Mammary epithelial cell (primary cell): ENCODE measurements at regions of chr18 and their contacts with region 1.

Region 1: GRCh38 chr18:50194631-50195532 is at the start of gene MYO5B:
- DNase-seq: peak; percentile 89
- H3K4me3 ChIP-seq: peak within 1 kb of the TSS; percentile 57 to 72 (median 69)
- H3K27ac ChIP-seq: peak within 1 kb of the TSS; percentile 69
- H3K4me1 ChIP-seq: peaks cover 32% of the 10 kb centered on the region
- H3K27me3 ChIP-seq: peaks cover 2% of the 10 kb centered on the region
- CTCF ChIP-seq: peak; percentile 30 to 41
- total RNA-seq, gene MYO5B: 29.8 to 31.7 TPM

Region 2: GRCh38 chr18:49510393-49511115 is 684.3 kb before region 1 on chr18:
- CTCF ChIA-PET with region 1: no interaction called
- dilution Hi-C with region 1: loop called (anchors 25 kb)
- in situ Hi-C with region 1: loop called in 1 of 2 experiments (anchors 25 kb)
- intact Hi-C with region 1: loop called (anchors 5 kb)
- DNase-seq: peak; percentile 46
- H3K4me3 ChIP-seq: no peak overlapping the region
- H3K27ac ChIP-seq: no peak overlapping the region
- H3K4me1 ChIP-seq: no peaks in the 10 kb centered on the region
- H3K27me3 ChIP-seq: no peaks in the 10 kb centered on the region
- CTCF ChIP-seq: peak; percentile 92 to 93

Region 3: GRCh38 chr18:49898421-49898820 is 296.5 kb before region 1 on chr18:
- CTCF ChIA-PET with region 1: no interaction called
- dilution Hi-C with region 1: no loop called
- in situ Hi-C with region 1: loop called in 1 of 2 experiments (anchors 25 kb)
- intact Hi-C with region 1: loop called (anchors 10 kb)
- DNase-seq: peak; percentile 52
- H3K4me3 ChIP-seq: no peak overlapping the region
- H3K27ac ChIP-seq: no peak overlapping the region
- H3K4me1 ChIP-seq: no peaks in the 10 kb centered on the region
- H3K27me3 ChIP-seq: no peaks in the 10 kb centered on the region
- CTCF ChIP-seq: no peak

Region 4: DNA sequence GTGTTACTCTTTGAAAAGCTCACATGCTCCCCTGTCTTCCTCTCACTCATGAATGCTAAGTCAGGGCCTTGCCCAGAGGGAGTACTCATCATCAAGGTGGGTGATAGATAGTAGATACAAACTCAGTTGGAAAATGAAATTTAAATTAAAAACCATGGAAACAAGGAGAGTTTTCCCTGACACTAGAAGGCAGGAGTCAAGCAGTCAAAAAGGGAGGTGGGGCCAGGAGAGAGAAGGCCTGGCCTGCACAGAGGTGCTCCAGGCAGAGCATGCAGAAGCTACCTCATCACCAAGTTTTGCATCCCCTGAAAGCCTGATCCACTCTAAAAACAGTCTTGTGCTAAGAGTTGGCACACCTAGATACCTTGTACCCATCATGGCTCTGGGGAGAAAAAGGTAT is 143.6 kb before region 1 on chr18:
- CTCF ChIA-PET with region 1: interaction called, 3 read pairs
- dilution Hi-C with region 1: loop called (anchors 10 kb)
- in situ Hi-C with region 1: no loop called
- intact Hi-C with region 1: loop called (anchors 1 kb)
- DNase-seq: peak; percentile 32
- H3K4me3 ChIP-seq: no peak overlapping the region
- H3K27ac ChIP-seq: no peak overlapping the region
- H3K4me1 ChIP-seq: no peaks in the 10 kb centered on the region
- H3K27me3 ChIP-seq: no peaks in the 10 kb centered on the region
- CTCF ChIP-seq: peak; percentile 32 to 60

Region 5: GRCh38 chr18:50099725-50100407 is 95.0 kb before region 1 on chr18:
- CTCF ChIA-PET with region 1: no interaction called
- dilution Hi-C with region 1: no loop called
- in situ Hi-C with region 1: loop called (anchors 10 kb)
- intact Hi-C with region 1: loop called (anchors 1 kb)
- DNase-seq: peak; percentile 98
- H3K4me3 ChIP-seq: no peak overlapping the region
- H3K27ac ChIP-seq: peak overlapping the region; percentile 75
- H3K4me1 ChIP-seq: peaks cover 45% of the 10 kb centered on the region
- H3K27me3 ChIP-seq: no peaks in the 10 kb centered on the region
- CTCF ChIP-seq: no peak

Region 6: DNA sequence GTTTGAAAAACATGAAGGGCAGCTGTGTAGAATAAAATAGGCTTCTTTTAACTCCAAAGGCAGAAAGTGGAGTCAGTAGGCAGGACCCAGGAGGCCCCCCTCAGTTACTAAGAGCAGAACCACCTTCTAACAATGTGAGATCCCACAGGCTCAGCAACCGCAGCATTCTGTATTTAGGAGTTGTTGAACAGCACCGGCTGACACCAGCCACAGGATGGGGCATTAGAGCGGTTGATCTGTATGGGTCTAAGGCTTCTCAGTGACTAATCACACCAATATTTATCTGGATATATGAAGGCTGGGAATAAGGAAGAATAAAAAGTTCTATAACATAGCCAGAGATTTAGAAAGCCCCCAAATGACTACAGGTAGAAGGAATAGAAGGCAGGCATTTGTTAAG is 51.6 kb before region 1 on chr18:
- CTCF ChIA-PET with region 1: interaction called, 5 read pairs
- dilution Hi-C with region 1: no loop called
- in situ Hi-C with region 1: no loop called
- intact Hi-C with region 1: loop called (anchors 5 kb)
- DNase-seq: no peak
- H3K4me3 ChIP-seq: no peak overlapping the region
- H3K27ac ChIP-seq: peak overlapping the region; percentile 19
- H3K4me1 ChIP-seq: peaks cover 32% of the 10 kb centered on the region
- H3K27me3 ChIP-seq: no peaks in the 10 kb centered on the region
- CTCF ChIP-seq: peak; percentile 12 to 18

Region 7: GRCh38 chr18:50262977-50263376 is 68.1 kb after region 1 on chr18:
- CTCF ChIA-PET with region 1: no interaction called
- dilution Hi-C with region 1: no loop called
- in situ Hi-C with region 1: no loop called
- intact Hi-C with region 1: no loop called
- DNase-seq: no peak
- H3K4me3 ChIP-seq: no peak overlapping the region
- H3K27ac ChIP-seq: no peak overlapping the region
- H3K4me1 ChIP-seq: peaks cover 7% of the 10 kb centered on the region
- H3K27me3 ChIP-seq: no peaks in the 10 kb centered on the region
- CTCF ChIP-seq: no peak